ENCODE measurements at regions of chr9 and their contacts with region 1.

Region 1: DNA sequence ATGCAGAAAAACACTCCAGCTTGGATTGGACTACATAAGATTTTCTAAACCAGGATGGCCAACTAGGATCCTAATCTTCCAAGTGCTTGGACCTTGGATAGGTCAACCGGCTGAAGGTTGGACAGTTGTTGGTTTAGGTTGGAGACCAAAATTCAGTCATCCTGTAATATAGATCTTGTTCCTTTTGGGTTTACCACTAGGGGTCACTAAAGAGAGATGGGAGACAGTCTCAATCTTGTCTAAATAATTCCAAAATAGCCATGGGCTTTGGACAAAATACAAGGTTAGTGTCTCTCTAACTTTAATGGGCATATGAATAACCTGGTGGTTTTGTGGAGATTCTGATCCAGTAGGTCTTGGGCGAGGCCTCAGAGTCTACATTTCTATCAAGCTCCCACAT is 148.7 kb upstream of the ERCC6L2 start:
- DNase-seq: no peak
- H3K4me3 Mint-ChIP-seq: no peak overlapping the region
- H3K27ac Mint-ChIP-seq: no peak overlapping the region
- H3K4me1 Mint-ChIP-seq: peaks cover 31% of the 10 kb centered on the region
- H3K27me3 Mint-ChIP-seq: peaks cover 15% of the 10 kb centered on the region

Region 2: DNA sequence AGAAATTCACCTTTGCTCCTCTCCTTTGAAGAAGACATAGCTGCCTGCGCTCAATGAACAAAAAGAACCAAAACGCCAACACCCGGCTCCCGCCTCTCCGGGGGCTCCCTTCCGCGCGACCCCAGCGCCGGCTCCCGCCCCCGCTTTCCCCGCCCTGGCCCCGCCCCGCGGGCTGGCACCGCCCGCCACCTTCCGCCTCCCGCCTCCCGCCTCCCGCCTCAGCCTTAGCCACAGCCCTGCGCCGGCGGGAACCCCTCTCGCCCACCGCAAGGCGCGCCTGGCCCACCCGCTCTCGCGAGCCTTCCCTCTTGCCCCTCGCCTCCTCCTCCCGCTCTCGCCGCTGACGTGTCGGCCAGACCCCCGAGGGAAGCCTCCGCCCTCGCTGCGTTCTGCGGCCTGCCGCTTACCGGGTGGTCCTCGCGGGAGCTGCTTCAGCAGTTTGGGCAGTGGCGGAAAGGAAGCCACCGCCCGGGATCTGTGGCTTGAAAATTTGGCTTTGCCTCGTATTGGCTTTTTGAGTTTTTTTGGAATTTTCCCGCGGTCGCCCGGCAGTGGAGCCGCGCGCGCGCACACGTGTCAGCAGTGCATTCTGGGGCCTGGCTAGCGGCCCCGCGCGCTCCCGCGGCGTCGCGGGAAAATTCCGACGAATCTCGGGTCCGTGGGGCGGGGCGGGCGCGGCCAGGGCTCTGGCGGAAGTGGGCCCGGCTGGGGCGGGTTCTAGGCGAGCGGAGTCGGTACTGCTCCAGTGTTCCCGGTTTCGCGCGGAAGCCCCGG is 409.4 kb before region 1 on chr9 and contains the start of gene FANCC:
- intact Hi-C with region 1: loop called (anchors 5 kb)
- DNase-seq: peak; percentile 96
- H3K4me3 Mint-ChIP-seq: peak within 1 kb of the TSS; percentile 91
- H3K27ac Mint-ChIP-seq: peak within 1 kb of the TSS; percentile 96
- H3K4me1 Mint-ChIP-seq: peaks cover 16% of the 10 kb centered on the region
- H3K27me3 Mint-ChIP-seq: peaks cover 23% of the 10 kb centered on the region
- total RNA-seq, gene FANCC: 16.7 and 18.0 TPM in 2 replicates

Region 3: GRCh38 chr9:95510709-95511615 is 215.8 kb before region 1 on chr9:
- intact Hi-C with region 1: loop called (anchors 2 kb)
- DNase-seq: peak; percentile 96
- H3K4me3 Mint-ChIP-seq: peak overlapping the region; percentile 86
- H3K27ac Mint-ChIP-seq: peak overlapping the region; percentile 86
- H3K4me1 Mint-ChIP-seq: peaks cover 29% of the 10 kb centered on the region
- H3K27me3 Mint-ChIP-seq: peaks cover 62% of the 10 kb centered on the region

Region 4: DNA sequence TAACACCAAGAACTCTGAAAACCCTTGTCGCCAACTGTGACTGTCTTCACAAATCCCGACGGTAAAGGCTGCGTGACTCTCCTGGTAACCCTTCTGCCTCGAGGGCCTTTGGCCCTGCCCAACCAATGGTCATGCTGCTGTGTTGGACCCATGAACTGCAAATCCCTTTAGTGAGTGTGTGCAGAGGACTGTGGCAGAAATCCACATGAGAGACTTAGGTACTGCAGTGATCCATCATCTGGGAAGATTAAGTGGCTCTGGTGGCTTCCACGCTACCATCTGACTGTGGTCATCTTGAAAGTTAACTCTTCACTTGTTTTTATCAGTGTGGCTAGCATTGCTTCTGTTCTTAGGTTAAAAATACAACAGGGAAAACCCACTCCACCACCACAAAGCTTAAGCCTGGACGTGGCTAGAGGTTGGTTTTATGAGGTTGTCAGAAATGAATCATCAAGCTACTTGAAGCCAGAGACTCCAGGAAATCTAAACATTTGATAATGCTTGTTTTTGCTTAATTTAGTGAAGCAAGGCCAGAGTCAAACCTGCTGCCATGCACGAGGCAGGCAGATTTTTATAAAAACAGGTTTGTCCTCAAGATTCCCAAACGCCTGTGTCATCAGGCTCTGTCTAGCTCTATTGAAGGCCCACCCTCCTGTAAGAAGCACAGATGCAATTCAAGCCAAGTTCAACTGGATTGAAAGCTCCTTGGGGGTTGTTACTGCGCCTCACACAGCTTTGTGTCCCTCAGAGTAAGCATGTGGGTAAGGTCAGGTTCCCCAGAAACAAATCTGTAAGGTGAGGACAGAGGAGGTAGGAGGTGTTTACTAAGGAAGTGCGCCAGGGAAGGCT is 96.1 kb after region 1 on chr9:
- intact Hi-C with region 1: loop called (anchors 1 kb)
- DNase-seq: peak; percentile 83
- H3K4me3 Mint-ChIP-seq: peak overlapping the region; percentile 53
- H3K27ac Mint-ChIP-seq: peak overlapping the region; percentile 72
- H3K4me1 Mint-ChIP-seq: peaks cover 34% of the 10 kb centered on the region
- H3K27me3 Mint-ChIP-seq: peaks cover 39% of the 10 kb centered on the region

Region 5: GRCh38 chr9:95875305-95876137 is 148.8 kb after region 1 on chr9 and contains the start of gene ERCC6L2:
- intact Hi-C with region 1: loop called (anchors 1 kb)
- DNase-seq: peak; percentile 98
- H3K4me3 Mint-ChIP-seq: no peak within 1 kb of the TSS
- H3K27ac Mint-ChIP-seq: no peak within 1 kb of the TSS
- H3K4me1 Mint-ChIP-seq: peaks cover 37% of the 10 kb centered on the region
- H3K27me3 Mint-ChIP-seq: no peaks in the 10 kb centered on the region
- total RNA-seq, gene ERCC6L2: 32.1 and 35.7 TPM in 2 replicates

Region 6: DNA sequence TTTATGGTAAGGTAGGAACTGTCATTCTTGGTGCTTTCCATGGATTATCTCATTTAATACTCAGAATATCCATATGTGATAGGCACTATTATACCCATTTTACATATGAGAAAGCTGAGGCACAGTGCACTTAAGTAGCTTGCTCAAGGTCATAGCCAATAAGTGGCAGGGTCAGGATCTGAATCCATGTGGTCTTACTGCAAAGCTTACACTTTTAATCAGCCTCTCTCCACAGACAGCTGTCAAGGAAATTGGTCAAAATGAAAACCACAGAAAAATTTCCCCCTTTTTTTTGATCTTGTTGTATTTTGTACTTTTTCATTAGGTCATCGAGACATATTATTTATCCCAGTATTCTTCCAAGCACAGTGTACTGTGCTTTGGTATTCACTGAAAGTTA is 227.2 kb after region 1 on chr9:
- intact Hi-C with region 1: no loop called
- DNase-seq: no peak
- H3K4me3 Mint-ChIP-seq: no peak overlapping the region
- H3K27ac Mint-ChIP-seq: no peak overlapping the region
- H3K4me1 Mint-ChIP-seq: peaks cover 7% of the 10 kb centered on the region
- H3K27me3 Mint-ChIP-seq: no peaks in the 10 kb centered on the region

Region 7: DNA sequence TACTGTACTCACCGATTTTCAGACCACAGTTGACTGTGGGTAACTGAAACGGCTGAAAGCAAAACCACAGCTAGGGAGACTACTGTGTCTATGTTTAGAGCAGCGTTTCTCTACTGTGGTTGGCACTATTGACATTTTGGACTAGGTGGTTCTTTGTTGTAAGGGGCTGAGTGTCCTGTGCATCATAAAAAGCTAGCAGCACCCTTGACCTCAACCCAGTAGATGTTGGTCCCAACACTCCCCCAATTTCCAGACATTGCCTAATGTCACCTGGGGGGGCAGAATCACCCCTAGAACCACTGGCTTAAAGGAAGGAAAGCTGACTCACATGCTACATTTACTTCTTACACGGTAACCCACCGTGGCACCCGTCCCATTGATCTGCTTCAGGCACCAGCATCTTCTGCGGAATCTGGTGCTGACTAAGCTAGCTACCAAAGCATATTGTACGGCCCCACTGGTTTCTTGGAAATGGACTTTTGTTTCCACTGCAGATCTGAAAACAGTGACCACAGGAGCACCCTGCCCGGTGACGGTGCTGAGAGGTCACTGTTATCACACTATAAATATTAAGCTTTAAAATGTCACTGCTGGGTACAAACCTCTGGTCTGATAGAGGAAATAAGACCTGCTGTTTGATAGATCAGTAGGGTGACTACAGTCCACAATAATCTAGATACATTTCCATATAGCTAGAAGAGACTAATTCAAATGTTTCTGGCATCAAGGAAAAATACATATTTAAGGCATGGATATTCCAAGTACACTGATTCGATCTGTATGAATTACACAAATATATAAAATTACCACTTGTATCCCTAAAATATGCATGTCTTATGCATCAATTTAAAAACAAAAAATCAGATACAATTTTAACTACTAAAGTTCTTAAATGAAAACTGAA is 423.8 kb after region 1 on chr9:
- intact Hi-C with region 1: loop called (anchors 10 kb)
- DNase-seq: peak; percentile 83
- H3K4me3 Mint-ChIP-seq: peak overlapping the region; percentile 58
- H3K27ac Mint-ChIP-seq: peak overlapping the region; percentile 68
- H3K4me1 Mint-ChIP-seq: peaks cover 32% of the 10 kb centered on the region
- H3K27me3 Mint-ChIP-seq: peaks cover 21% of the 10 kb centered on the region

Region 8: GRCh38 chr9:96241391-96241809 is 514.6 kb after region 1 on chr9:
- intact Hi-C with region 1: loop called (anchors 1 kb)
- DNase-seq: peak; percentile 82
- H3K4me3 Mint-ChIP-seq: no peak overlapping the region
- H3K27ac Mint-ChIP-seq: peak overlapping the region; percentile 70
- H3K4me1 Mint-ChIP-seq: peaks cover 14% of the 10 kb centered on the region
- H3K27me3 Mint-ChIP-seq: peaks cover 61% of the 10 kb centered on the region

Measured in activated CD4-positive, alpha-beta T cell treated with anti-CD3 and anti-CD28 coated beads, Interleukin-2, amount 10 ng/mL, durations not matched to agents 24 days and 14 days (primary cell).